ENCODE measurements at regions of chr10 and their contacts with region 1.

Region 1: GRCh38 chr10:94076321-94076841 is 82.7 kb downstream of the PLCE1 start:
- DNase-seq: peak; percentile 16
- H3K4me3 ChIP-seq: no peak overlapping the region
- H3K27ac ChIP-seq: peak overlapping the region in 2 of 4 donors; percentile 16 to 40
- H3K4me1 ChIP-seq: peaks cover 0 to 20% (median 7%) of the 10 kb centered on the region in 4 donors
- H3K27me3 ChIP-seq: no peaks in the 10 kb centered on the region
- CTCF ChIP-seq: peak; percentile 30 to 45 (median 39)
- EP300 ChIP-seq: no peak
- POLR2A ChIP-seq: no peak

Region 2: DNA sequence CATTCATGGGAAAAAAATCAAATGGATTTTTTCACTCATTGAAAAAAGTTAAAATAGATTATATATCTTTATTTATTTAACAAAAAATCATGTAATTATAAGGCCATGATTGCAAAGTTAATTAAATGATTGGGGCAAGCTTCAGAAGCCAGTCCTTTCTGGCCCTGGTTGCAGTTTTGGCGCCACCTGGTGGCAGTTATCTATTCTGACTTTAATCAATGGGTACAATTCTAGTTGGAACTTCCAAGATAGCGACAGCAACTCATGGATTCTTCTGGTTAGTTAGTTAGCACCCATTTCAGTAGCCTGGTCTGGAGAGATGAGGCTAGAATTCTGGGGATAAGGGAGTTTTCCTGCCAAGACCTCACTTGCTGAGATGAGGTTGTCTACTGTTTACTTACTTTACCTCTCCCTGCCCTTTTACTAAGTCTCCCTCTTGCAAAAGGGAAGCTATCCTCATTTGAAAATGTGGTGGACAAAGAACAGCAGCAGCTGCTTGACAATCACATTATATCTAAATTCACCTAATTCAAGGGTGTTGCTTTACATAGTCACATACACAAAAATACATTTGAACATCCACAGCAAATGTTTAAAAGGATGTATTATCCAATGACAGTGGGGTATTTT is 244.0 kb after region 1 on chr10:
- in situ Hi-C with region 1: no loop called
- intact Hi-C with region 1: loop called (anchors 10 kb)
- DNase-seq: peak; percentile 65
- H3K4me3 ChIP-seq: no peak overlapping the region
- H3K27ac ChIP-seq: no peak overlapping the region
- H3K4me1 ChIP-seq: peaks cover 0 to 4% (median under 1%) of the 10 kb centered on the region in 4 donors
- H3K27me3 ChIP-seq: no peaks in the 10 kb centered on the region
- CTCF ChIP-seq: peak; percentile 76 to 92 (median 82)
- EP300 ChIP-seq: no peak
- POLR2A ChIP-seq: no peak

Measured in transverse colon (tissue), 4 donors.